A549 (cell line): ENCODE measurements at regions of chr10 and their contacts with region 1.

Region 1: GRCh38 chr10:17737027-17737965 is 14.7 kb upstream of the TMEM236 start:
- DNase-seq: peak; percentile 30 to 36
- ATAC-seq: peak; percentile 43 to 60; a peak in 3 of 6 replicates
- H3K4me3 ChIP-seq: no peak overlapping the region
- H3K27ac ChIP-seq: no peak overlapping the region
- H3K4me1 ChIP-seq: 0 out of 3 replicates have a peak, but pooled peaks cover 3% of the 10 kb centered on the region
- CTCF ChIP-seq: peak; percentile 84
- EP300 ChIP-seq: no peak
- POLR2A ChIP-seq: no peak
- RAD21 ChIP-seq: peak; percentile 66 to 71

Region 2: DNA sequence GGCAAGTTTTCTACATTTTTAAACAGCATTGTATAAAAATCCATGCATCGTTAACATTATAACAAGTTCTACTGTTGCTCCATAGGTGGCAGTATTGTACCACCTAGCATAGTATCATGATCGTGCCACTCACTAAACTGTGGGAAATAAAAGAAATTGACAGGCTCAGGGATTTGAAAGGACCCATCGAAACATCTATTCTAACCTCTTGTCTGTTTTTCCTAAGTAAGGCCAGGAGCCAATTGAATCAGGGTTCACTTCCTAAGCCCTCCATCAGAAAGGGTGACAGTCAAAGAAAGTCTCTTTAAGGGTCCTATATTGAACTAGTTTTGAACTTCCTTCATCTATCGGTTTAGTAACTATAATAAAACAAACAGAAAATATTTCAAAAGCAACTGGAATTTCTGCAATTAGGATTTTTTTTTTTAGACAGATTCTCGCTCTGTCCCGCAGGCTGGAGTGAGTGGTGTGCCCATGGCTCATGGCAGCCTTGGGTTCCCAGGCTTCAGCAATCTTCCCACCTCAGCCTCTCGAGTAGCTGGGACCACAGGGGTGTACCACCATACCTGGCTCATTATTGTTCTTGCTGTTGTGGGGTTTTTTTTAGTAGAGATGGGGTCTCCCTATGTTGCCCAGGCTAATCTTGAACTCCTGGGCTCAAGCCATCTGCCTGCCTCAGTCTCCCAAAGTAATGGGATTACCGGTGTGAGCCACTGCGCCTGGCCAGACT is 129.5 kb before region 1 on chr10:
- CTCF ChIA-PET with region 1: interaction called, 11 read pairs
- POLR2A ChIA-PET with region 1: no interaction called
- DNase-seq: peak; percentile 49 to 67
- ATAC-seq: peak; percentile 94
- H3K4me3 ChIP-seq: no peak overlapping the region
- H3K27ac ChIP-seq: no peak overlapping the region
- H3K4me1 ChIP-seq: no peaks in the 10 kb centered on the region
- CTCF ChIP-seq: peak; percentile 94
- EP300 ChIP-seq: no peak
- POLR2A ChIP-seq: no peak
- RAD21 ChIP-seq: peak; percentile 90 to 97

Region 3: GRCh38 chr10:17712717-17713471 is 24.4 kb before region 1 on chr10:
- CTCF ChIA-PET with region 1: interaction called, 10 read pairs
- POLR2A ChIA-PET with region 1: no interaction called
- DNase-seq: no peak
- ATAC-seq: no peak
- H3K4me3 ChIP-seq: no peak overlapping the region
- H3K27ac ChIP-seq: no peak overlapping the region
- H3K4me1 ChIP-seq: no peaks in the 10 kb centered on the region
- CTCF ChIP-seq: no peak
- EP300 ChIP-seq: no peak
- POLR2A ChIP-seq: no peak
- RAD21 ChIP-seq: no peak

Region 4: DNA sequence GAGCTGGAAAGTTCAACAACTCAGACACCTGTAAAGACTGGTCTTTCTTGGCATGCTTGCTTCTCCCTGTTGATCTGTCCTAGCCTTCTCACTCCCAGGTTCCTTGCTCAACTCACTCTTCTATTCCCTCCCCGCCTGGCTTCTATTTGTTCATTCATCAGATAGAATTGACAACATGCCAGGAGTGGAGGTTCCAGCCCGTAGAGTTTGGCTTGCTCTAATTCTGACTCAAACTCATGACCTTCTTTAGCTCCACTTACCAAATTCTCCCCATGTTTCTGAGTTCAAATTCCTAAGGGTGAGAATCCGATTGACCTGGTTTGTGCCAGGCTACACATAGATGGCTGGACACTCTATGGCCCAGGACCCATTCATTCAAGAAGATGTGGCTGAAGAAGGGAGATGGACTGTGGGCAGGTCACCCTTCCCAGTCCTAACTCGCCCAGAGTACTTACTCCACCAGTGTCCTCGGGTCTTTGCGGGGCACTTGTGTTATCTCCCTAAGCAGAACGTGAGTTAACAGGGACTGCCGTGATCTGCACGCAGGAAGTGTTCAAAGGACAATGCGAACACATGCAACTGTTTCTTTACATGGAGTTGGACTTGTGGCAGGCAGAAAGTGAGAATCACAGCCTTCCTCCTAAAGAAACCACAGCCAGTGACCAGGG is 10.7 kb after region 1 on chr10:
- CTCF ChIA-PET with region 1: interaction called, 18 read pairs
- POLR2A ChIA-PET with region 1: no interaction called
- DNase-seq: peak in 1 of 2 experiments; percentile 10
- ATAC-seq: peak; percentile 33 to 49; a peak in 3 of 6 replicates
- H3K4me3 ChIP-seq: no peak overlapping the region
- H3K27ac ChIP-seq: peak overlapping the region in 1 of 2 experiments; percentile 56; a peak in 1 of 6 replicates
- H3K4me1 ChIP-seq: peaks cover 6% of the 10 kb centered on the region; the same call in 1 of the 3 replicates
- CTCF ChIP-seq: no peak
- EP300 ChIP-seq: no peak
- POLR2A ChIP-seq: no peak
- RAD21 ChIP-seq: no peak

Region 5: GRCh38 chr10:17756557-17757217 is 19.4 kb after region 1 on chr10:
- CTCF ChIA-PET with region 1: interaction called, 11 read pairs
- POLR2A ChIA-PET with region 1: no interaction called
- DNase-seq: peak; percentile 7 to 21
- ATAC-seq: peak; percentile 47 to 61; a peak in 3 of 6 replicates
- H3K4me3 ChIP-seq: no peak overlapping the region
- H3K27ac ChIP-seq: 0 out of 6 replicates have a peak overlapping the region, but pooled peaks of 1 of the 2 experiments have one; percentile 5
- H3K4me1 ChIP-seq: no peaks in the 10 kb centered on the region
- CTCF ChIP-seq: no peak
- EP300 ChIP-seq: no peak
- POLR2A ChIP-seq: no peak
- RAD21 ChIP-seq: no peak

Region 6: DNA sequence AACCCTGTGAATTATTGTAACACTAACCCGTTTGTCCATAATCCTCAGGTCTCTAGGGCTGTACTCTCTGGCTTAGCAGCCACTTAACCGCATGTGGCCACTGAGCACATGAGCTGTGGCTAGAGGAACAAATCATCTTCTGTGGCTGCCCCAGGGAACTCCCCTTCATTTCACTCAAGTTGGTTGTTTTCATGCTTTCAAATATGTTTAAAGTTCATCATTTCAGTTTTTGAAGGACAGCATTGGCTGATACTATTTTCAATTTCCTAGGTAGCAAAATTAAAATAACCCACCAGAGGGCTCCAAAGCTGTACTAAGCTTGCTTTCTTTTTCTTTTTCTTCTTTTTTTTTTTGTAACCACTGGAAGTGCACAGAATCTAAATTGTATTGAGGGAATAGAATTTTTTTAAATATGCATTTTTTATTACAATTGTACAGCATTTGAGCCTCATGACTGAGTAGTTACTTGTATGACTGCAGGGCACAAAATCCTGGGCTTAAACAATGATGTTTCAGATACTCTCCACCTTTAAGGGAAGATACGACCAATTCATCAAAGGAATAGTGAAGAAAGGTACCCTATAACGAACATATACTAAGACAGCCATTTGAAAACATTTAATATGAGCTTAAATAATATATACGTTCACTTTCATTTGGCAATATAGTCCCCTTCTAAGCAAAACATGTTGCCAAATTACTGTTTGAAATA is 110.4 kb after region 1 on chr10:
- CTCF ChIA-PET with region 1: interaction called, 10 read pairs
- POLR2A ChIA-PET with region 1: no interaction called
- DNase-seq: no peak
- ATAC-seq: peak; percentile 64 to 70; a peak in 5 of 6 replicates
- H3K4me3 ChIP-seq: no peak overlapping the region
- H3K27ac ChIP-seq: no peak overlapping the region
- H3K4me1 ChIP-seq: no peaks in the 10 kb centered on the region
- CTCF ChIP-seq: peak; percentile 68
- EP300 ChIP-seq: no peak
- POLR2A ChIP-seq: no peak
- RAD21 ChIP-seq: peak; percentile 57 to 60